Caco-2 (cell line): ENCODE measurements at regions of chr3 and their contacts with region 1.

Region 1: DNA sequence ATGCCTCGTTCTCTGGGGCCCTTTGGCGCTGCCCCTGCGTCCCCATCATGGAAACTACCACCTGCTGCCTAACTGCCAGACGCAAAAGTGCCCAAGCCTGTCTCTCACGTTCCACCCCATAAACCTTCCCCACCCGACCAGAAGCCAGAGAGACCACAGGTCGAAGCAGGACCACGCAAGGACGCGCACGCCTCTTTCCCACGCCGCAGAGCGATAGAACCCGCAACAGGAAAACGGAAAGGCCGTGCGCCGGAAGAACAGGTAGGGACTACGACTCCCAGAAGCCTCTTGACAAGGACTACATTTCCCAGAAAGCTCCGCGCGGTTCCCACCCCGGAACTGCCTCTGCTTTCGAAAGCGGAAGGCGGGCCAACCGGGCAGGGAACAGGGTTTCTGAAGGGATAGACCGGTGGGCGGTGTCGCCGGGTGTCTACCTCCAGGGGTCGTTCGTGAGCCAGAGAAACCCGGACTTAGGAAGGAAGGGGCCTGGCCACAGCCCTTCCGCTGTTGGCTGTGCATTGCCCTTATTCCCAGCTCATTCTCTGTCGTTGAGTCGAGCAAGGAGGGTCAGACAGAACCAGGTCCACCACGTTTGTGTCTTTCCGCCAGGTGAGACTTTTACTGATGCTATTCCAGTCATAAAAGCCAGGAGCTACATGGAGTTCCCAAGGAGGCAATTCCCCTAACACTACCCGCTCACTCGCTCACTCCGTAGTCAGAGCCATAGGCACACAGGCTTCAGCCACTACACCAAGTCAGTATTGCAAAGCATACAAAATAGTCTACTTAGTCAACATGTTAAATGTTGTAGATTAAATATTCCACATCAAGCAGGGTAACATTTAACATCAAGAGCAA is 56.6 kb upstream of the ZBTB38 start:
- DNase-seq: peak; percentile 98 to 99
- H3K4me3 ChIP-seq: peak overlapping the region; percentile 82
- H3K4me3 Mint-ChIP-seq: peak overlapping the region; percentile 92
- H3K27ac Mint-ChIP-seq: peak overlapping the region; percentile 89
- H3K4me1 ChIP-seq: peaks cover 9% of the 10 kb centered on the region
- H3K4me1 Mint-ChIP-seq: peaks cover 5% of the 10 kb centered on the region
- H3K27me3 ChIP-seq: no peaks in the 10 kb centered on the region
- H3K27me3 Mint-ChIP-seq: no peaks in the 10 kb centered on the region
- CTCF ChIP-seq: peak; percentile 82 to 84

Region 2: GRCh38 chr3:141231101-141231935 is 80.4 kb before region 1 on chr3 and contains the start of gene PXYLP1:
- CTCF ChIA-PET with region 1: interaction called, 9 read pairs
- POLR2A ChIA-PET with region 1: interaction called, 3 read pairs
- intact Hi-C with region 1: loop called (anchors 1 kb)
- DNase-seq: peak; percentile 91 to 96
- H3K4me3 ChIP-seq: peak within 1 kb of the TSS; percentile 80
- H3K4me3 Mint-ChIP-seq: peak within 1 kb of the TSS; percentile 84
- H3K27ac Mint-ChIP-seq: peak within 1 kb of the TSS; percentile 15
- H3K4me1 ChIP-seq: peaks cover 38% of the 10 kb centered on the region
- H3K4me1 Mint-ChIP-seq: peaks cover 44% of the 10 kb centered on the region
- H3K27me3 ChIP-seq: no peaks in the 10 kb centered on the region
- H3K27me3 Mint-ChIP-seq: no peaks in the 10 kb centered on the region
- CTCF ChIP-seq: peak; percentile 26 to 56
- total RNA-seq, gene PXYLP1: 22.8 and 24.6 TPM in 2 replicates

Region 3: GRCh38 chr3:141360888-141361598 is 49.3 kb after region 1 on chr3:
- CTCF ChIA-PET with region 1: interaction called, 20 read pairs
- POLR2A ChIA-PET with region 1: interaction called, 7 read pairs
- intact Hi-C with region 1: loop called (anchors 1 kb)
- DNase-seq: peak; percentile 87 to 88
- H3K4me3 ChIP-seq: no peak overlapping the region
- H3K4me3 Mint-ChIP-seq: no peak overlapping the region
- H3K27ac Mint-ChIP-seq: peak overlapping the region; percentile 87
- H3K4me1 ChIP-seq: peaks cover 25% of the 10 kb centered on the region
- H3K4me1 Mint-ChIP-seq: peaks cover 26% of the 10 kb centered on the region
- H3K27me3 ChIP-seq: no peaks in the 10 kb centered on the region
- H3K27me3 Mint-ChIP-seq: no peaks in the 10 kb centered on the region
- CTCF ChIP-seq: peak; percentile 56 to 76

Region 4: GRCh38 chr3:141452036-141452435 is 140.3 kb after region 1 on chr3:
- CTCF ChIA-PET with region 1: interaction called, 35 read pairs
- POLR2A ChIA-PET with region 1: no interaction called
- intact Hi-C with region 1: loop called (anchors 1 kb)
- DNase-seq: peak; percentile 51 to 61
- H3K4me3 ChIP-seq: no peak overlapping the region
- H3K4me3 Mint-ChIP-seq: no peak overlapping the region
- H3K27ac Mint-ChIP-seq: no peak overlapping the region
- H3K4me1 ChIP-seq: peaks cover 44% of the 10 kb centered on the region
- H3K4me1 Mint-ChIP-seq: peaks cover 25% of the 10 kb centered on the region
- H3K27me3 ChIP-seq: no peaks in the 10 kb centered on the region
- H3K27me3 Mint-ChIP-seq: no peaks in the 10 kb centered on the region
- CTCF ChIP-seq: peak; percentile 46 to 64

Region 5: GRCh38 chr3:141561426-141562034 is 249.8 kb after region 1 on chr3:
- CTCF ChIA-PET with region 1: no interaction called
- POLR2A ChIA-PET with region 1: no interaction called
- intact Hi-C with region 1: loop called (anchors 1 kb)
- DNase-seq: peak in 1 of 2 experiments; percentile 69
- H3K4me3 ChIP-seq: no peak overlapping the region
- H3K4me3 Mint-ChIP-seq: no peak overlapping the region
- H3K27ac Mint-ChIP-seq: no peak overlapping the region
- H3K4me1 ChIP-seq: peaks cover 8% of the 10 kb centered on the region
- H3K4me1 Mint-ChIP-seq: no peaks in the 10 kb centered on the region
- H3K27me3 ChIP-seq: no peaks in the 10 kb centered on the region
- H3K27me3 Mint-ChIP-seq: no peaks in the 10 kb centered on the region
- CTCF ChIP-seq: peak; percentile 87 to 96